Aorta (tissue), 5 donors: ENCODE measurements at regions of chr18 and their contacts with region 1.

Region 1: GRCh38 chr18:72866901-72867701 is 686 bp downstream of the NETO1 start:
- DNase-seq: no peak
- ATAC-seq: no peak
- H3K4me3 ChIP-seq: peak overlapping the region in 1 of 2 donors; percentile 4
- H3K27ac ChIP-seq: no peak overlapping the region
- H3K4me1 ChIP-seq: no peaks in the 10 kb centered on the region
- H3K27me3 ChIP-seq: no peaks in the 10 kb centered on the region

Region 2: GRCh38 chr18:72808680-72809079 is 58.4 kb before region 1 on chr18:
- intact Hi-C with region 1: loop called in 1 of 2 experiments (anchors 10 kb)
- DNase-seq: no peak
- ATAC-seq: peak; percentile 36
- H3K4me3 ChIP-seq: no peak overlapping the region
- H3K27ac ChIP-seq: no peak overlapping the region
- H3K4me1 ChIP-seq: no peaks in the 10 kb centered on the region
- H3K27me3 ChIP-seq: no peaks in the 10 kb centered on the region